Breast epithelium (tissue), 4 donors: ENCODE measurements at regions of chr20 and their contacts with region 1.

Region 1: DNA sequence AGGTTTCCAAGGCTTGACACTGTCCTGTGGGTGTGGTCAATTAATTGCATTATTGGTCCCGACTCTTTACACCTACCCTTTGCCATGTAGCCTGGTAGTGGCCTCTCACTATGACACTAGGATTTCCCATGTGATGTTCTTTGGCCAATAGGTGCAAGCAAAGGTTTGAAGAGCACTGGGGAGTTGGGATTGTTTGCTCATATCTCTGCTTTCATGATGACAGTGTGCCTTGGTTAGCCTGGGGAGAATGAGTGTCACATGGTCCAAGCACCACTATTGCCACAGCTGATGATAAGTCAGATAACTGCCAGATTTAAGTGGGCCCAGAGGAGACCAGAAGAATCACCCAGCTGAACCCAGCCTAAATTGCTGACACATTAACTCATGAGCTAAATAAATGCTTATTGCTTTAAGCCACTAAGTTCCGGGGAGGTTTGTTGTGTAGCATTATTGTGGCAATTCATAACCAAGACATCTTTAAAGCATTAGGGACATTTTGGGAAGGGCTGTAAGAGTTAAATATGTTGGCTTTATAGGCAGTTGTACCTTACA is 17.2 kb upstream of the SCP2D1 start:
- DNase-seq: no peak
- H3K4me3 ChIP-seq: no peak overlapping the region
- H3K27ac ChIP-seq: no peak overlapping the region
- H3K4me1 ChIP-seq: peaks cover 0 to 4% of the 10 kb centered on the region in 2 donors
- H3K27me3 ChIP-seq: no peaks in the 10 kb centered on the region
- CTCF ChIP-seq: no peak
- POLR2A ChIP-seq: no peak

Region 2: GRCh38 chr20:18628330-18628920 is 167.9 kb before region 1 on chr20:
- intact Hi-C with region 1: loop called (anchors 5 kb)
- DNase-seq: peak in 1 of 2 donors; percentile 60
- H3K4me3 ChIP-seq: no peak overlapping the region
- H3K27ac ChIP-seq: no peak overlapping the region
- H3K4me1 ChIP-seq: no peaks in the 10 kb centered on the region
- H3K27me3 ChIP-seq: no peaks in the 10 kb centered on the region
- CTCF ChIP-seq: peak in 2 of 3 donors; percentile 37 to 38
- POLR2A ChIP-seq: no peak